Activated CD4-positive, alpha-beta memory T cell treated with anti-CD3 and anti-CD28 coated beads, Interleukin-2, amount 10 ng/mL, durations not matched to agents 7 days and 5 days (primary cell): ENCODE measurements at regions of chr2 and their contacts with region 1.

Region 1: GRCh38 chr2:200888704-200889625 is at the starts of genes NIF3L1 and PPIL3:
- DNase-seq: peak; percentile 98
- H3K4me3 Mint-ChIP-seq: peak within 1 kb of the TSS; percentile 89
- H3K27ac Mint-ChIP-seq: peak within 1 kb of the TSS; percentile 99
- H3K4me1 Mint-ChIP-seq: peaks cover 58% of the 10 kb centered on the region
- H3K27me3 Mint-ChIP-seq: no peaks in the 10 kb centered on the region
- total RNA-seq, gene NIF3L1: 28.9 to 30.1 TPM
- total RNA-seq, gene PPIL3: 101 to 102 TPM

Region 2: DNA sequence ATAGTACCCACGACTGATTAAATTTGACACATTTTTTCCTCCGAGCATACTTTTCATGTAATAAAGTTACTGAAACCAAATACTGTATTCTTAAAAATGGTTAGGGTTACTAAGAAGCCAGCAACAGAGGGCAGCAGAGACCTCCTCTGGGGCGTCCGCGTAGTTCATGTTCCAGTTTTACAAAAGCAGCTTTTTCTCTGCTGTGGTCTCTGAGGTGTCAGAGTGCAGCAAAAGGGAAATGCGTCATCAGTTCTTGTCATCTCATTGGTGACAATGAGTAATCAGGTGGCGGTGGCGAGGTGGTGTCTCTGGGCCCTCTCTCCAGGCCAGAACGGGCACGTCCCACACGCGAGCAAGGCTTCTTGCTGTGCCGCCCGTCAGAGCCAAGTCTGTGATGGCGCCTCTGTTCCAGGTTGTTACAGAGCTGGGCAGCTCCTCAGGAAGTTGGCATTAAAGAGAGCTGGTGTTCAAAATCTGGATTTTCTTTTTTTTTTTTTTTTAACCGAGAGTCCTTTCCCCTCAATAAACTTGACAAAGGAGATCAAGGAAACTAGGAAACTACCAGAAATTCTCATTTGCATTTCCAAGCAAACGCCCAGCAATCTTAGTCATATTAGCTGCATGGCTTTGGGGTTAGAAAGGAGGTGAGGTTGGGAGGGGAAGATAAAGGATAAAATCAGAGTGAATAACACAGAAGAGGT is 175.8 kb before region 1 on chr2:
- CTCF ChIA-PET with region 1: interaction called, 10 read pairs
- POLR2A ChIA-PET with region 1: interaction called, 25 read pairs
- DNase-seq: peak; percentile 96
- H3K4me3 Mint-ChIP-seq: peak overlapping the region; percentile 49
- H3K27ac Mint-ChIP-seq: peak overlapping the region; percentile 97
- H3K4me1 Mint-ChIP-seq: peaks cover 25% of the 10 kb centered on the region
- H3K27me3 Mint-ChIP-seq: no peaks in the 10 kb centered on the region

Region 3: DNA sequence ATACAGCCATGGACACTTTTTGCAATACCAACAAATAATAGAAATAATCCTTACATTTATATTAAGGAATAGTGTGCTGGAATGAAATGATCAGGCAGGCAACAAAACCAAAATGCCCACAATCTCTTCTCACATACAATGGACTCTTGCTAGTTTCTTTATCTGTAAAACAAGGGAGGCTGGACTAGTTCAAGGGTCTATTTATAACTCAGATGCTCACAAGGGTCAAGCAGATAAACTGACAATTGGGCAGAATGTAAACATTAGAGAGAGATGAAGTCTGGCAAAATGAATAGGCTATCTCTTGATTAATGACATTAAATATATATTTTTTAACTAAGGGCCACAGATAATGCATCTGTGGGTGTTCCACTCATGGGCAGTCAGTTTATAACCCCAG is 11.5 kb before region 1 on chr2:
- CTCF ChIA-PET with region 1: no interaction called
- POLR2A ChIA-PET with region 1: interaction called, 17 read pairs
- DNase-seq: no peak
- H3K4me3 Mint-ChIP-seq: no peak overlapping the region
- H3K27ac Mint-ChIP-seq: no peak overlapping the region
- H3K4me1 Mint-ChIP-seq: peaks cover 10% of the 10 kb centered on the region
- H3K27me3 Mint-ChIP-seq: no peaks in the 10 kb centered on the region

Region 4: GRCh38 chr2:200963124-200963917 is 74.4 kb after region 1 on chr2 and contains the start of gene ORC2:
- CTCF ChIA-PET with region 1: interaction called, 5 read pairs
- POLR2A ChIA-PET with region 1: interaction called, 16 read pairs
- DNase-seq: peak; percentile 93
- H3K4me3 Mint-ChIP-seq: peak within 1 kb of the TSS; percentile 92
- H3K27ac Mint-ChIP-seq: peak within 1 kb of the TSS; percentile 86
- H3K4me1 Mint-ChIP-seq: peaks cover 72% of the 10 kb centered on the region
- H3K27me3 Mint-ChIP-seq: no peaks in the 10 kb centered on the region
- total RNA-seq, gene ORC2: 50.8 to 51.6 TPM

Region 5: GRCh38 chr2:201108341-201108740 is 219.4 kb after region 1 on chr2:
- CTCF ChIA-PET with region 1: no interaction called
- POLR2A ChIA-PET with region 1: no interaction called
- DNase-seq: no peak
- H3K4me3 Mint-ChIP-seq: no peak overlapping the region
- H3K27ac Mint-ChIP-seq: no peak overlapping the region
- H3K4me1 Mint-ChIP-seq: peaks cover 6% of the 10 kb centered on the region
- H3K27me3 Mint-ChIP-seq: peaks cover 4% of the 10 kb centered on the region

Region 6: GRCh38 chr2:201118121-201118960 is 229.4 kb after region 1 on chr2:
- CTCF ChIA-PET with region 1: interaction called, 9 read pairs
- POLR2A ChIA-PET with region 1: interaction called, 82 read pairs
- DNase-seq: peak; percentile 90
- H3K4me3 Mint-ChIP-seq: peak overlapping the region; percentile 96
- H3K27ac Mint-ChIP-seq: peak overlapping the region; percentile 98
- H3K4me1 Mint-ChIP-seq: peaks cover 50% of the 10 kb centered on the region
- H3K27me3 Mint-ChIP-seq: no peaks in the 10 kb centered on the region

Region 7: GRCh38 chr2:201182650-201183364 is 293.8 kb after region 1 on chr2 and contains the start of gene CASP10:
- CTCF ChIA-PET with region 1: interaction called, 6 read pairs
- POLR2A ChIA-PET with region 1: interaction called, 13 read pairs
- DNase-seq: no peak
- H3K4me3 Mint-ChIP-seq: peak within 1 kb of the TSS; percentile 98
- H3K27ac Mint-ChIP-seq: peak within 1 kb of the TSS; percentile 84
- H3K4me1 Mint-ChIP-seq: peaks cover 57% of the 10 kb centered on the region
- H3K27me3 Mint-ChIP-seq: no peaks in the 10 kb centered on the region
- total RNA-seq, gene CASP10: 47.8 to 51.3 TPM

Region 8: GRCh38 chr2:201257956-201258665 is 369.1 kb after region 1 on chr2:
- CTCF ChIA-PET with region 1: no interaction called
- POLR2A ChIA-PET with region 1: interaction called, 18 read pairs
- DNase-seq: peak; percentile 96
- H3K4me3 Mint-ChIP-seq: peak overlapping the region; percentile 81
- H3K27ac Mint-ChIP-seq: peak overlapping the region; percentile 98
- H3K4me1 Mint-ChIP-seq: peaks cover 68% of the 10 kb centered on the region
- H3K27me3 Mint-ChIP-seq: no peaks in the 10 kb centered on the region